ENCODE measurements at regions of chr4 and their contacts with region 1.

Region 1: GRCh38 chr4:108313546-108314339 is 145.0 kb upstream of the LEF1 start:
- DNase-seq: no peak
- ATAC-seq: no peak

Region 2: GRCh38 chr4:107629318-107629717 is 684.4 kb before region 1 on chr4:
- intact Hi-C with region 1: no loop called
- DNase-seq: no peak
- ATAC-seq: no peak

Region 3: DNA sequence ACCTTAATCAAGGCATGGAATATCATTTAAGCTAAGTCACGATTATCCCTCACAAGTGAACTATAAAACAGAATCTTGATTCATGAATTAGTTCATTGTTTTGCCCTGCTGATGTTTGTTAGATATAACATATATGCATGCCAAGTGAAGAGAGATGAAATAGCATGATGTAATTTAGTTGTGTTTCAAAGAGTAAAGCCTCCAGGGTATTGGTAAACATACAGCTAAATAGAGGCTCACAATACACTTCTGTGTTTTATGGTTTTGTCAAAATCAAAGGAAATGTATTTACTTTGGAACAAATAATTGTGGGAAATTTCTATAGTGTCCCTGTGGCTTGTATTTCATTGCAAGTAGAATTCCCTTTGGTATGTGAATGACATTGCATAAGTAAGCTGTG is 76.0 kb before region 1 on chr4:
- intact Hi-C with region 1: loop called (anchors 10 kb)
- DNase-seq: no peak
- ATAC-seq: no peak

Measured in left ventricle myocardium superior (tissue), 1 donor.